ENCODE measurements at regions of chr2 and their contacts with region 1.

Region 1: DNA sequence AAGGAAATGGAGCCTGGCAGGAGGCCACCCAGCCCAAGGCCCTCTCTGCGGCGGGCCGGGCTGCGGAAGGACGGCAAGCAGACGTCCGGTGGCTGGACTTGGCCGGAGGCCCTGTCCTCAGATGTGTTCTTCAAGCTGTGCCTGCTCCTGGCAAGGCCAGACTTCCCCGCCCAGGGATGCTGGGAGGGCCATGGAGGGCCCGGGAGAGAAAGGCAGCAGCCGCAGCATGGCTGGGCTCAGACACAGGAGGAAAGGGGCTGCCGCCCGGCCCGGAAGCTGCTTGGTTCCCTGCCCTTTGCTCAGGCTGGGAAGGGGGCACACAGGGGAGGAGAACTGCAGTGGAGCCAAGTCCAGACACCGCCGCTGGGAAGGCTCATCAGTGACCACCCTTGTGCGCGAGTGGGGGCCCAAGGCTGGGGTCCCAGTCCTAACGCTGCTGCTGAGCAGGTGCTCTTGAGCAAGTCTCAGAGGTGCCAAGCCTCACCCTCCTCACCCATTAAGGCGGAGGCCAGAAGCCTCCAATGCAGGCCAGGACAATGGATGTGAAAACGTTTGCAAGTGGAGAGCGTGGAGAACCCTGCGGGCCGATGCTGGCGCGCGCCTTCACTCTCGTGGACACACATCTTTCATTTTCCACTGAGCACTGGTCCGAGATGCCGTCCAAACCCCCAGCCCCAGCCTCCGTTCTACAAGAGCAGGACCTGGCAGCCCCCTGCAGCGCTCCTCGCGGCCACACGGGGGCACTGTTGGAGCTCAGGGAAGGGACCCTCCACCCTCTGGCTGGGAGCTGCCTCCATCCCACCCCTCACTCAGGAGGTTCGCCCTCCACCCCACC is 7.9 kb downstream of the CROCC2 start:
- DNase-seq: peak; percentile 91
- ATAC-seq: peak; percentile 68 to 74

Region 2: GRCh38 chr2:240742602-240743095 is 171.4 kb before region 1 on chr2:
- intact Hi-C with region 1: no loop called
- DNase-seq: no peak
- ATAC-seq: no peak

Region 3: DNA sequence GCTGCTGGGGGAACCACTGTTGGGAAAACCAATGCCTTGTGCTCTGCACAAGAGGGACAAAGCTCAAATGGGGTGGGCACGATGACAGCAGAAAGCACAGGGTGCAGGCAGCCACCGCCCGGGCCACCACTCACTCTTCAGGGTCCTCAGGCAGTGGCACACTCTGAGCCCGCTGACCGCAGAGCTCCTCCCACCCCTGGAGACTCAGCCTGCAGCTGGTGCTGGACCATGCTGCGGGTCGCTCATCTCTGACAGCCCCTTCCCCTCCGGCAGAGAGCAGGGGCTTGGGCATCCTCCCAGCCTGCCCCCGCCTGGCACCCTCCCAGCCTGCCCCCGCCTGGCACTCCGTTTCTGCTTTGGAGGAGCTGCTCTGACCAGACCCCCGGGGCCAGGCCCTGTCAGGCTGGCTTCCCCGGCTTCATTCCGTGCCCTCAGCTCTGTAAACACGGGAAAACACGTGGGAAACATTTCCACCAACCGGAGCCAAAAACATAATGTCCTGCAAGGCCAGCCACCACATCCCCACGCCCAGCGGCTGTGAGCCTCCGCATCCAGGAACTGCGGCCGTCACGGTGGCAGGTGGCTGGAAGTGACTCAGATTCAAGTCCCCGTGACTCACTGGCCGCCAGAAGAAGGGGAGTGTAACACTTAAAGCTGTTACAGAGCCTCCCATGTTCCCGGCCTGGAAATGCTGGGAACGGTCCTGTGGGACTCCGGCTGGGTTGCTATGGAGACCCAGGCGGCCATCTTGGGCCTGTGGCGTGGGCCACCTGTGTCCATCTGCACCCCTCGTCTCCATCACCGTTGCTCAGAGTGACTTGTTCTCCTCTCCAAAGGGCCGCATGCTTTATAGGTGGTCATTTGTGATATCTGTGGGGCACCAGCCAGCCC is 77.6 kb after region 1 on chr2:
- intact Hi-C with region 1: loop called (anchors 5 to 10 kb)
- DNase-seq: peak; percentile 93
- ATAC-seq: peak; percentile 60 to 75

Region 4: DNA sequence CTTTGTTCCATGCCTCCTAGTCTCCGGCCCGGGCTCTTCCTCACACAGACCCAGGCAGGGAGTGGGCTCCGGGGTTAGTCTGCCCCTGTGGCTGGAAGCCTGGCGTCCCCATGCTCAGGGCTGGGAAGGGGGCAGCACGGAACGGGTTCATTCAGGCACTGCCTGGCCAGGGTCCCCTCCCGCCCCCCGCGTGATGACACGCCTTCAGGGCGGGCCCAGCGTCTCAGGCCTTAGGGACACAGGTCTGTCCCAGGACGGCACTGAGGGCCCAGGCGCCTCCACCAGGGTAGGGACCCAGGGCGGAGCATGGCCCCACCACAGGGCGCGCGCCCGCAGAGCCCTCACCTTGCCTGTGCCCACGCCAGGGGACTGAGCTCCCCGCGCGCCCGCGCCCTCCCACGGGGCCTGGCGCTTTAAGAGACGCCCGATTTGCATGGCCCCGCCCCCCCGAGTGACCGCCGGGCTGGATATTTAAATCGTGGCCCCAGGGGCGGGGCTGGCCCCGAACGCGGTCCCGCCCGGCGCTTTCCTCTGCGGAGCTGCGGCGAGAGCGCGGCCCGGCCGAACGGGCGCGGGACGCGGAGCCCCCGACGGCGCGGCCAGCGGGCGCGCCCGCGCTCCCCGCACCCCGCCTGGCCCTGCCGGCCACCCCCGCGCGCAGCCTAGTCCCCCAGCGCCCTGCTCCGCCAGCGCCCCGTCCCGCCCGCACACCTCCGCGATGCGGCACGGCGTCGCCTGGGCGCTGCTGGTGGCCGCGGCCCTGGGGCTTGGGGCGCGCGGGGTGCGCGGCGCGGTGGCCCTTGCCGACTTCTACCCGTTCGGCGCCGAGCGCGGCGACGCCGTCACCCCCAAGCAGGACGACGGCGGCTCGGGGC is 84.3 kb after region 1 on chr2 and contains the start of gene SNED1:
- intact Hi-C with region 1: loop called (anchors 5 to 10 kb)
- DNase-seq: peak; percentile 94
- ATAC-seq: peak; percentile 87 to 93
- total RNA-seq, gene SNED1: 12.2 to 31.9 TPM

Region 5: DNA sequence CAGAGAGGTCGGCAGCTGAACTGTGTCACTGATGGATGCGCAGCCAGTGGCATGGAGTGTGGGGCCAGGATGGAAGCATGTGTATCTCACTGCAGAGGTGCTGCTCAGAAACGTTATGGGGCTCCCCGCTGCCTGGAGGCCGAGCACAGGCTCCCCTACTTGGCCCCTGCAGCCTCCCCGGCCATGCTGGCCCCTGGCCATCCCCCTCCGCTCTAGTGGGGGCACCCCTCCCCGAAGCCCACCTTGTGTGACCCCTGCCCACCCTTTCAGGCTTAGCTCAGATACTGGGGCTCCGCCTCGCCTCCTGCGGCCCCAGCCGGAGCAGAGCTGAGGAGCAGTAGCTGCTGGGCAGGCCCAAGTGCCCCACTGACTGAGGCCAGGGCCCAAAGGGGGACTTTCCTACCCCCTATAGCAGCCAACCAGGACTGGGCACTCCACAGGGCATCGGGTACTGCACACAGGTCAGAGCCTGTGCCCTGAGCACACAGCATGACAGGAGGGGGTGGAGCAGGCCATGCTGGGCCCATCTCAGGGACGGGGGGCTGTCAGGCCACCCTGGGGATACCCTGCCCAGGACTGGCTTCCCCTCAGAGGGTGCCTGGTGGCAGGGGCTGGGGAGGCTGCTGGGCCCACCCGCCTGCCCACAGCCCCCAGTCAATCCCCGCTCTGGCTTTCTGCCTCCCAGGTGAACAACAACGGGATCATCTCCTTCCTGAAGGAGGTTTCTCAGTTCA is 115.7 kb after region 1 on chr2:
- intact Hi-C with region 1: no loop called
- DNase-seq: no peak
- ATAC-seq: no peak